GM23248 (cell line): ENCODE measurements at regions of chr2 and their contacts with region 1.

Region 1: DNA sequence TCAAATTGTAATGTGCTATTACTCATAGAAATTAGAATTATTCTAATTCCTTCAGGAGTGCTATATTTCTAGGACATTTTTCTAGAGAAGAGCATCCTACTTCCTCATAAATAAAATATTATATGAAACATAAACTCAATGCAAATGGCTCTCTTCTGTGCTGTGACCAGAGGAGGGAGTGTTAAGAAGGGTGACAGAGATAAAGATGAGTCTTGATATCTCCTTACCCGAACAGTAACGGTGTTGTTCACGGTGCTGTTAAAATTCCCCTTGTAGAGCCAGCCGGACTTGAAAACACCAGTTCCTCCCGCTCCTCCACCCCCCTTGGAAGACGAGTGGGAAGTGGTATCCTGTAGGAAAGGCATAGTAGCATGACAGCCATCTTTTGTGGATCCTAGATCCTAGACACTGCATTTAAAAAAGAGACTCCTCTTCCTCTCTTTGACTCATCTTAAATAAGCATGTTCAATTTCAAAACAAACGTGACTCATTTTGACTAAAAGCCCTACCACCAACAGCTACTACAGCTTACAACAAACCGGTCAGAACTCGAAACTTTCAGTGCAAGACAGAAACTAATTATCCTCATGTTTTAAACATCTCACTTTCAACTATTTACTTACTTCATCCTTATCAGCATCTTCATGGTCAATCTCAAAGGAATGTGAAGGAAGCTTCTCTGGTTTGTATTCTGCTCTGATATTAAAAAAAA is 156.3 kb downstream of the DOCK10 start:
- DNase-seq: peak; percentile 92
- H3K4me3 ChIP-seq: peak overlapping the region; percentile 51
- H3K27ac ChIP-seq: peak overlapping the region; percentile 97
- H3K4me1 ChIP-seq: peaks cover 65% of the 10 kb centered on the region
- H3K27me3 ChIP-seq: no peaks in the 10 kb centered on the region

Region 2: GRCh38 chr2:224711859-224712665 is 173.9 kb before region 1 on chr2:
- in situ Hi-C with region 1: no loop called
- DNase-seq: peak; percentile 42
- H3K4me3 ChIP-seq: peak overlapping the region; percentile 45
- H3K27ac ChIP-seq: no peak overlapping the region
- H3K4me1 ChIP-seq: no peaks in the 10 kb centered on the region
- H3K27me3 ChIP-seq: no peaks in the 10 kb centered on the region

Region 3: GRCh38 chr2:225637259-225637658 is 751.3 kb after region 1 on chr2:
- in situ Hi-C with region 1: loop called (anchors 25 kb)
- DNase-seq: peak; percentile 13
- H3K4me3 ChIP-seq: no peak overlapping the region
- H3K27ac ChIP-seq: no peak overlapping the region
- H3K4me1 ChIP-seq: no peaks in the 10 kb centered on the region
- H3K27me3 ChIP-seq: peaks cover 17% of the 10 kb centered on the region; the same call in 1 of the 2 replicates